BJ (cell line): ENCODE measurements at regions of chr3 and their contacts with region 1.

Region 1: GRCh38 chr3:61945657-61946056 is 384.3 kb downstream of the PTPRG start:
- DNase-seq: no peak
- H3K4me3 ChIP-seq: no peak overlapping the region
- H3K27me3 ChIP-seq: no peaks in the 10 kb centered on the region
- CTCF ChIP-seq: no peak

Region 2: DNA sequence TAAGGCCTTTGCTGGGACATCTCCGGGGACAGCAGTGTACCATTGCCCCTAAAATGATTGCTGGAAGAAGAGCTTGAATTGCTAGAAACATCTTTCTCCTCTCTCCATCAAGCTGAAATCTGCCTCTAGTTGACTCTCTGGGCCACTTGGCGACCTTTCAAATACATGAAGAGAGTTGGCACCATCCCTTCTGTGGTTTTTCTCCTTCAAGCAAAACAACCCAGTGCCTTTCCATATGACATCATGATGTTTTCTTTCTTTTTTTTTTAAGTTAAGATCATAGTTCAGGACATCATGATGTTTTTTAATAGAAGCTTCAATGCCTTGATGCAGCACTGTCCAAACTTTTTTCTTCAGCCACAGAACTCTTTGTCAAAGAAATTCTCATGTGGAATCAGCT is 528.3 kb before region 1 on chr3:
- CTCF ChIA-PET with region 1: no interaction called
- POLR2A ChIA-PET with region 1: no interaction called
- DNase-seq: no peak
- H3K4me3 ChIP-seq: no peak overlapping the region
- H3K27me3 ChIP-seq: no peaks in the 10 kb centered on the region
- CTCF ChIP-seq: no peak

Region 3: GRCh38 chr3:61980041-61980440 is 34.4 kb after region 1 on chr3:
- CTCF ChIA-PET with region 1: no interaction called
- POLR2A ChIA-PET with region 1: interaction called, 12 read pairs
- DNase-seq: peak; percentile 19
- H3K4me3 ChIP-seq: no peak overlapping the region
- H3K27me3 ChIP-seq: no peaks in the 10 kb centered on the region
- CTCF ChIP-seq: no peak